ENCODE measurements at regions of chr15 and their contacts with region 1.

Region 1: GRCh38 chr15:74799856-74800547 is 12.6 kb upstream of the LMAN1L start:
- DNase-seq: peak; percentile 90
- H3K4me3 Mint-ChIP-seq: no peak overlapping the region
- H3K27ac Mint-ChIP-seq: peak overlapping the region; percentile 83
- H3K4me1 Mint-ChIP-seq: peaks cover 13% of the 10 kb centered on the region
- H3K27me3 Mint-ChIP-seq: no peaks in the 10 kb centered on the region
- CTCF ChIP-seq: peak; percentile 97

Region 2: DNA sequence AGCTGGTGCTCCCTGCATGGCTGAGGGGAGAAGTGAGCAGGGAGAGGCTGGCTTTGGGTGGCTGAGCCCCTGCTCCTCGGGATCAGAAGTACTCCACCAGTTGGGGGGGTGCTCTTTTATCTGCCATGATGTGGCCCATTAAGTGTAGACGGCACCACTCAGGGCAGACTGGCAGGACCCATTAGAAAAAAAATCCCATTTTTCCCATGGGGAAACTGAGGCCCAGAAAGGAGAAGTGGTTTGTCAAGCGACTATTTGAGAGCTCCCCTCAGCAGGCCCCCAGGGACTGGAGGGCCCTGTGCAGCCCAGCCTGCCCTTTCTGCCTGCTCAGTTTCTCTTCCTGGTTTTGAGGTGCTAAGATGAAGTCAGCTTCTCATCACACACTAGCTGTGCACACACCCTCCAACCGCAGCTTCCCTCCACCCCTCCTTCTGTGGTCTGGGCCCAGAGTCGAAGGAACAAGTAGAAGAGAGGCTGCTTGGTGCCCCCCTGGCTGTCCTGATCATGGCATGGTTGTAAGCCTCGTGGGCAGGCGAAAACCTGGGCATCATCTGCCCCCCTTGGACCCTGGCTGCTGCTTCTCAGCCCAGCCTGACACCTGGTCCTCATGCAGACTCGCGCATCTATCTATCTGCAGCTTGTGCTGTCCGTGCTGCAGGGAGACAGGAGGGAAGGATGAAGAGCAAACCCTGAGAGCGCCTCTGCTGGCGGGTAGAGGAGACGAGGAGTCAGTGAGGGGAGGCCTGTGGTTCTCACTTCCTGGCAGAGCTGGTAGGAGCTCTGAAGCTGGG is 12.6 kb before region 1 on chr15:
- CTCF ChIA-PET with region 1: interaction called, 27 read pairs
- POLR2A ChIA-PET with region 1: interaction called, 33 read pairs
- intact Hi-C with region 1: no loop called
- DNase-seq: peak; percentile 40
- H3K4me3 Mint-ChIP-seq: no peak overlapping the region
- H3K27ac Mint-ChIP-seq: no peak overlapping the region
- H3K4me1 Mint-ChIP-seq: peaks cover 53% of the 10 kb centered on the region
- H3K27me3 Mint-ChIP-seq: no peaks in the 10 kb centered on the region
- CTCF ChIP-seq: no peak

Region 3: GRCh38 chr15:74928771-74929198 is 128.8 kb after region 1 on chr15:
- CTCF ChIA-PET with region 1: no interaction called
- POLR2A ChIA-PET with region 1: no interaction called
- intact Hi-C with region 1: no loop called
- DNase-seq: no peak
- H3K4me3 Mint-ChIP-seq: no peak overlapping the region
- H3K27ac Mint-ChIP-seq: no peak overlapping the region
- H3K4me1 Mint-ChIP-seq: no peaks in the 10 kb centered on the region
- H3K27me3 Mint-ChIP-seq: no peaks in the 10 kb centered on the region
- CTCF ChIP-seq: no peak

Region 4: GRCh38 chr15:74950078-74951000 is 150.3 kb after region 1 on chr15:
- CTCF ChIA-PET with region 1: interaction called, 16 read pairs
- POLR2A ChIA-PET with region 1: interaction called, 5 read pairs
- intact Hi-C with region 1: no loop called
- DNase-seq: peak; percentile 80
- H3K4me3 Mint-ChIP-seq: no peak overlapping the region
- H3K27ac Mint-ChIP-seq: no peak overlapping the region
- H3K4me1 Mint-ChIP-seq: peaks cover 7% of the 10 kb centered on the region
- H3K27me3 Mint-ChIP-seq: no peaks in the 10 kb centered on the region
- CTCF ChIP-seq: peak; percentile 97